ENCODE measurements at regions of chr12 and their contacts with region 1.

Region 1: DNA sequence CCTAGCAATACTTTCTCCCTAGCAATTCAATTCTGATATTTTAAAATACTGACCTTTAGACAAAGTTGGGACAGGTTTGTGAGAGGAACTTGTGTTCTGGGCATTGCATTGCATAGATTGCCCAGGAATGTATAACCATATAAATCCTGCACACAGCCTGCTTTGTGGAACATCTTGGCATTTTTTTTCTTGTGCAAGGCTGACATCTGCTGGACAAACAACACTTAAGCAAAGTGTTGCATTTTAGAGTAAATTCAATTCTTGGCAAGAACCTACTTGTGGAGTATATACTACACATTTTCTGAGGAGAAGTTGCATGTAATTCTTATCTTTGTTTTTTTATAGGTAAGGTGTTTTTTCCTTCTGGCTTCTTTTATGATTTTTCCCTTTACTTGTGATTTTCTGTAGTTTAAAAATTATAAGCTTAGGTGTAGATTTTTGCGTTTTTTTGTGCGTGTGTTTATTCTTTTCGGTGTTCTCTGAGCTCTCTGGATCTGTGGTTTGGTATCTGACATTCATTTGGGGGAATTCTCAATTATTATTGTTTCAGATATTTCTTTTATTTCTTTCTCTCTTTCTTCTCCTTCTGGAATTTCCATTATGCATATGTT is 26.4 kb downstream of the TESPA1 start:
- DNase-seq: no peak
- ATAC-seq: peak; percentile 48

Region 2: GRCh38 chr12:54526812-54527630 is 431.1 kb before region 1 on chr12:
- intact Hi-C with region 1: loop called (anchors 5 kb)
- DNase-seq: no peak
- ATAC-seq: peak; percentile 46

Region 3: GRCh38 chr12:54596526-54596946 is 361.6 kb before region 1 on chr12:
- intact Hi-C with region 1: loop called (anchors 5 kb)
- DNase-seq: no peak
- ATAC-seq: peak; percentile 59

Region 4: GRCh38 chr12:54701940-54702592 is 256.1 kb before region 1 on chr12:
- intact Hi-C with region 1: loop called (anchors 5 kb)
- DNase-seq: no peak
- ATAC-seq: no peak

Region 5: DNA sequence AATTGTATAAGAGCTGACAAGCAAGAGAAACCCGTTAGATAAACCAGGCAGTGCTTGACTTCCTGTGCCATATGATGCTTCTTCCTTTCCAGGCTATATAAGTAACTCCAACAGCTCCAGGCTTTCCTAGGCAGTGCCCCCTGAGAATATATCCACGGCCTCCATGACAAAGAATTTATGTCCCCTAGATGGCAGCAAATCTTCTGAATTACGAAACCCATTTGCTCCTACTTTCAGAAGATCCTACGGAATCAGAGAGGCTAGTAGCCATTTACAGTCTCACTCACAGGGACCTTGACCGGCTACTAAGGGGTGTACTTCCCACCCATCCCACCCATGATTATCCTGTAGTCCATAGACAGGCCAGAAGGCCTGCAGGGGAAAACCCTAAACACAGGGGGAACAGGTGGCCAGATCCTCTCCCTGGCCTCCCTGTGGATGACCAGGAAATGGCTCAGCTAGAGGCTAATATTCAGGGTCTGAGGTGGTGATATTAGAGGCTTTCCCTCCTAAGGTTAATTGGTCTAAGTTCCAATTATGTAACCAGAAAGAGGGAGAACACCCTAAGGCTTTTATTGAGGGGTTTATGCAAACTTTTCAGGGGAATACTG is 232.8 kb before region 1 on chr12:
- intact Hi-C with region 1: loop called (anchors 5 kb)
- DNase-seq: no peak
- ATAC-seq: peak; percentile 26

Region 6: DNA sequence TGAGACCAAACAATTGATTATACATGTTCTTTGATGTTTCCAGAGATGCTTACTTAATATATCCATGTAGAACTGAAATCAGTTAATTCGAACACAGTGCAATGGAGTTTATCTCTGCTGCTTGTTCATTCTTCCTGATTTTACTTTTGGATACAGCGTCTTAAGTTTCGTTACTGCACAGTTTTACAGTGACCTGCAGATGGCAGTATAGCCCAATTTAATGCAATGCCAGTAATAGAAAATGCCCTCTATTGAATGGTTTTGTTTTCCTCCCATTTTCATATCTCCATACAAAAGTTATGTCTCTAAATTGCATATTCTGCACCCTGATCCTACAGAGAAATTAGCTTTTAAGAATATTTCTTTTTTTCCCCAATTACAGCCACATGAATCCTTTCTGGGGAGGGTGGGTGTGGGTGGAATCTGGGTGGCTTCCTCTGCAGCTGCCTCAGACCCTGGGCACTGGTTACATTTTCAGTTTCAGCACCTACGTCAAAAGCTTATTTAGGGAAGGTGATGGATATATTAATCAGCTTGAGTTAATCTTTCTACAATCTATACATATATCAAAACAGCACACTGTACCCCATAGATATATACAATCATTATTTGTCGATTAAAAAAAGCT is 208.8 kb before region 1 on chr12:
- intact Hi-C with region 1: loop called (anchors 2 kb)
- DNase-seq: no peak
- ATAC-seq: no peak

Region 7: DNA sequence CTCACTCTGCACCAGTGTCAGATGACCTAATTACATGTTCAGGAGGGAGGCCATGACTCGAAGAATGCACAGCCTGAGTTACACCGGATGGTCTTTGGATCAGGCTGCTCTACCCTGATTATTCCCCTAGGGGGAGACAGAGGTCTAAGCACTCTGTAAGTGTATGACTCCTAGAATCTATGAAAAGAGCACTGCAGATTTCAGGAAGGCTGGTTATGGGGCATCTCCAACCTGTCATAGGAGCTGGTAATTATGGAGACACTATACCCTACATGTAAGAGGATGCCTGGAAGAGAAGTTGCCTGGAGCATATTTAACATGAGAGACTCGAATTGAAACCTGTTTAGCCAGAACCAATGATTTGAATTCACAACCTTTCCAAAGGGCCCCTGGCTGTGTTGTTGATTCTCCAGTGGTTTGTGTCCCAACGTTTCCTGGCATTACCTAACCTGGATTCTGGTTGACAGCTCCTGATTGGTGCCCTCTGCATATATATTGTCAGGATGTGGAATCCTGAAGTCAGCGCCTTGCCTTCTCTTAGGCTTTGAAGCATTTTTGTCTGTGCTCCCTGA is 104.1 kb before region 1 on chr12 and contains the start of gene MUCL1:
- intact Hi-C with region 1: loop called (anchors 5 kb)
- DNase-seq: no peak
- ATAC-seq: peak; percentile 69
- total RNA-seq, gene MUCL1: not detected